ENCODE measurements at regions of chr11 and their contacts with region 1.

Region 1: GRCh38 chr11:108497317-108498045 is 703 bp downstream of the POGLUT3 start:
- DNase-seq: peak; percentile 28 to 92 (median 60)
- ATAC-seq: peak; percentile 89
- H3K4me3 ChIP-seq: peak overlapping the region; percentile 77
- H3K4me3 Mint-ChIP-seq: peak overlapping the region; percentile 95
- H3K27ac ChIP-seq: peak overlapping the region; percentile 66 to 91
- H3K27ac Mint-ChIP-seq: peak overlapping the region; percentile 96
- H3K4me1 ChIP-seq: peaks cover 15% of the 10 kb centered on the region
- H3K4me1 Mint-ChIP-seq: peaks cover 27% of the 10 kb centered on the region
- H3K27me3 ChIP-seq: no peaks in the 10 kb centered on the region
- H3K27me3 Mint-ChIP-seq: no peaks in the 10 kb centered on the region
- CTCF ChIP-seq: no peak

Region 2: GRCh38 chr11:108121274-108122155 is 376.0 kb before region 1 on chr11 and contains the start of gene ACAT1:
- CTCF ChIA-PET with region 1: no interaction called
- POLR2A ChIA-PET with region 1: no interaction called
- intact Hi-C with region 1: loop called in 1 of 2 experiments (anchors 10 kb)
- DNase-seq: peak; percentile 91 to 98 (median 96)
- ATAC-seq: peak; percentile 98
- H3K4me3 ChIP-seq: peak within 1 kb of the TSS; percentile 84
- H3K4me3 Mint-ChIP-seq: peak within 1 kb of the TSS; percentile 89
- H3K27ac ChIP-seq: peak within 1 kb of the TSS in 1 of 2 donors; percentile 46
- H3K27ac Mint-ChIP-seq: peak within 1 kb of the TSS; percentile 53
- H3K4me1 ChIP-seq: peaks cover 40% of the 10 kb centered on the region
- H3K4me1 Mint-ChIP-seq: peaks cover 42% of the 10 kb centered on the region
- H3K27me3 ChIP-seq: no peaks in the 10 kb centered on the region
- H3K27me3 Mint-ChIP-seq: no peaks in the 10 kb centered on the region
- CTCF ChIP-seq: no peak
- total RNA-seq, gene ACAT1: 13.8 to 18.5 TPM

Region 3: DNA sequence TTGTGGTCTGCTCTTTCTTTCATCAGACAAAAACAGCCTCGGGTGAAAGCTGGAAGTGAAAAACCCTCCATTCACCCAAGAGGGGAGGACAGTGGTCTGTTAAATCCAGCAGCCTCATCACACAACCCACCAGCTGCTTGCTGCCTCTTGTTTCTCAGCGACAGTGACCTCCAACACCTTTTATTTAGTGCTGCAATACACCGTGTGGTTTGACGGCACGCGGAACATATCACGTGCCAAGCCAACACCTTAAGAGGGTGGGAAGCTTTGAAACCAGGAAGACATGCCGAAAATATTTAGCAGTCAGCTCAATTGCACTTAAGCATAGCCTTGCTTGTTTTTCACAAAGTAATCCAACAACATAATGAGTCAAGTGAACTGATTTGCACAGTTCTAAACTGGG is 40.5 kb after region 1 on chr11:
- CTCF ChIA-PET with region 1: no interaction called
- POLR2A ChIA-PET with region 1: no interaction called
- intact Hi-C with region 1: no loop called
- DNase-seq: peak in 5 of 14 experiments; percentile 3 to 39 (median 12)
- ATAC-seq: peak; percentile 48
- H3K4me3 ChIP-seq: no peak overlapping the region
- H3K4me3 Mint-ChIP-seq: peak overlapping the region; percentile 52
- H3K27ac ChIP-seq: no peak overlapping the region
- H3K27ac Mint-ChIP-seq: no peak overlapping the region
- H3K4me1 ChIP-seq: no peaks in the 10 kb centered on the region
- H3K4me1 Mint-ChIP-seq: no peaks in the 10 kb centered on the region
- H3K27me3 ChIP-seq: no peaks in the 10 kb centered on the region
- H3K27me3 Mint-ChIP-seq: no peaks in the 10 kb centered on the region
- CTCF ChIP-seq: no peak

Region 4: GRCh38 chr11:108664730-108665525 is 167.4 kb after region 1 on chr11 and contains the start of gene DDX10:
- CTCF ChIA-PET with region 1: no interaction called
- POLR2A ChIA-PET with region 1: interaction called, 6 read pairs
- intact Hi-C with region 1: loop called in 1 of 2 experiments (anchors 10 kb)
- DNase-seq: peak; percentile 96 to 99 (median 98)
- ATAC-seq: peak; percentile 99
- H3K4me3 ChIP-seq: peak within 1 kb of the TSS; percentile 72
- H3K4me3 Mint-ChIP-seq: peak within 1 kb of the TSS; percentile 98
- H3K27ac ChIP-seq: peak within 1 kb of the TSS; percentile 32 to 55
- H3K27ac Mint-ChIP-seq: peak within 1 kb of the TSS; percentile 89
- H3K4me1 ChIP-seq: peaks cover 19% of the 10 kb centered on the region
- H3K4me1 Mint-ChIP-seq: peaks cover 42% of the 10 kb centered on the region
- H3K27me3 ChIP-seq: no peaks in the 10 kb centered on the region
- H3K27me3 Mint-ChIP-seq: no peaks in the 10 kb centered on the region
- CTCF ChIP-seq: no peak
- total RNA-seq, gene DDX10: 15.0 to 15.4 TPM